ENCODE measurements at regions of chr2 and their contacts with region 1.

Region 1: GRCh38 chr2:55168221-55169154 is 63.6 kb downstream of the CLHC1 start:
- DNase-seq: peak; percentile 81
- H3K4me3 ChIP-seq: no peak overlapping the region
- H3K27ac ChIP-seq: peak overlapping the region; percentile 67 to 74 (median 70)
- H3K4me1 ChIP-seq: peaks cover 9 to 67% (median 61%) of the 10 kb centered on the region in 4 donors
- H3K27me3 ChIP-seq: no peaks in the 10 kb centered on the region
- CTCF ChIP-seq: peak; percentile 68 to 85 (median 73)
- EP300 ChIP-seq: no peak
- POLR2A ChIP-seq: no peak

Region 2: DNA sequence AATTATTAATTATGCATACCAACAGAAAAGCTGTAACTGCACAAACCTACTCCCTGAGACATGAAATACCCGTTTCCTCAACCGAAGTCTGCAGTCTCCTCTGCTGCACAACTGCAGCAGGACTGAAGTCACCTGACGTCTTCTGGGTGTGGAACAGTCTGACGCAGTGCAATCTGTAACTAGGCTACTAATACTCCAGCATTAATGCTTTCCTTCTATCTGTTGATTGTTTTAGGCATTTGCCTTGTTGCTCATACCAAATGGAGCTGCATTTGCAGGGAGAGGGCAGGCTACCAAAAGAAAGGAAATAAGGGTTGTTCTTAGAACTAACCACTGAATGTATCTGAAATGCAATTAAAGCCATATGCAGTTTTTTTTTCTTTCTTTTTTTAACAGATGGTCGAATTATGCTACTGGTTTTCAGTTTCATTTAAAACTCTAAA is 158.3 kb before region 1 on chr2:
- intact Hi-C with region 1: loop called (anchors 10 kb)
- DNase-seq: no peak
- H3K4me3 ChIP-seq: peak overlapping the region; percentile 35 to 47 (median 40)
- H3K27ac ChIP-seq: peak overlapping the region; percentile 20 to 56 (median 48)
- H3K4me1 ChIP-seq: peaks cover 64 to 100% (median 99%) of the 10 kb centered on the region in 4 donors
- H3K27me3 ChIP-seq: no peaks in the 10 kb centered on the region
- CTCF ChIP-seq: no peak
- EP300 ChIP-seq: no peak
- POLR2A ChIP-seq: no peak

Region 3: DNA sequence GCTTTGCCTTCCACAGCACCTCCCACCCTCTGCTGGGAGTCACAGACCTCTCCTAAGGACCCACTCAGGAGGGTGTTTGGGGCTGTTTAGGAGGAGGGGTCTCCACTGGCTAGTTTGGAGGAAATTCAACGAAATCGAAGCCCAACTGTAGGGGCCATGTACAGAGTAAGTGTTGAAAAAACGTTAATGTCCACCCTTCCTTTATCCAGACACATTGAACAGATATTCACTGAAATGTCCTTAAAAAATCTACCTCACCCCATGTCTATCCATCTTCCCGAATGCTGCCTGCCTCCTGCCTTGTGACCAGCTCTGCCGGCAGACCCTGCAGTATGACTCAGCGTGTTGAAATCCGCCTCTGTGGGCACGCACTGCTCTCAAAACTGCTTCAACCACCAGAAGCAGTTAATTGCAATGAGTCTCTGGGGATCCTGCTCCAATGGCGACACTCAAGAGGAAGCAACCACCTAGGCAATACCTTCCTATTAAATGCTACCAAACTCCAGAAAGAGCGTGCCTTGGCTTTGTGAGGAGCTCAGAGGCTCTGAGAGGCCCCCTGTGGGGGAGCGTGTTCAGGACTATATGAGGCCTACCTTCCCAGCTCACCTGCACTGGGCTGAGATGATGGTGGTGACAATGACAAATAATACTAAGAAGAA is 56.8 kb before region 1 on chr2:
- intact Hi-C with region 1: loop called (anchors 5 kb)
- DNase-seq: no peak
- H3K4me3 ChIP-seq: peak overlapping the region in 3 of 4 donors; percentile 15 to 19 (median 15)
- H3K27ac ChIP-seq: peak overlapping the region; percentile 88 to 91 (median 90)
- H3K4me1 ChIP-seq: peaks cover 24 to 88% (median 76%) of the 10 kb centered on the region in 4 donors
- H3K27me3 ChIP-seq: no peaks in the 10 kb centered on the region
- CTCF ChIP-seq: no peak
- EP300 ChIP-seq: no peak
- POLR2A ChIP-seq: no peak

Region 4: GRCh38 chr2:55268288-55268906 is 99.9 kb after region 1 on chr2:
- intact Hi-C with region 1: no loop called
- DNase-seq: no peak
- H3K4me3 ChIP-seq: peak overlapping the region; percentile 71 to 83 (median 72)
- H3K27ac ChIP-seq: peak overlapping the region; percentile 83 to 90 (median 88)
- H3K4me1 ChIP-seq: peaks cover 13 to 20% (median 18%) of the 10 kb centered on the region in 4 donors
- H3K27me3 ChIP-seq: no peaks in the 10 kb centered on the region
- CTCF ChIP-seq: no peak
- EP300 ChIP-seq: no peak
- POLR2A ChIP-seq: no peak